Caco-2 (cell line): ENCODE measurements at regions of chr15 and their contacts with region 1.

Region 1: DNA sequence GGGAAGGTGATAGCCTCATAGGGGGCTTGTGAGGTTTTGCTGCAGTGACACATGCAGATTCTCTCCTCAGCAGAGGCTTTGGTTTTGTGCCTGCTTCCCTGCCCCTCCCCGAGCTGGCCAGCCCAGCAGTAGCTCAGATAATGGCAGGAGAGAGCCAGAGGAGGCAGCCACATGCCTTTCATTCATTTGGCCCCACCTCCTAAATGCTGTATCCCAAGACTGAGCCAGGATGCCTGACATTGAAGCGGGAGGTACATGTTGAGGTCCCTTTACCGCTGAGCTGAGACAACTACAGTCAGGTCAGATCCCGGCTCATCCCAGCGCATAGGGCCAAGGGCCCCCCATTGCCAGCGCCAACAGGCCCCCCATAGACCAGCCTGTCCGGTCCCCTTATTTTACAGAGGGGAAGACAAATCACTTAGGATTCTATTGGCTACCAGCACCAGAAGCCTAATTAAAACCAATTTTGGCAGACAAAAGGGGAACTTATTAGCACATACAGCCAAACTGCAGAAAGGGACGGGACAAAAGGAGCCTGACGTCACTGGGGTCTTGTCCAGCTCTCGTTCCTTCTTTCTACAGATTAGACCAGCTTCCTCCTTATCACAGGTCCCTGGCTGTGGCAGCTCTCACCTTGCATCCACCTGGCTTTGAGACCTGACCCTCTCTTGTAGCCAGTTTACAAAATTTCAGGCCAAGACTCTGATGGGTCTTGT is 12.1 kb upstream of the POLG start:
- DNase-seq: no peak
- H3K4me3 ChIP-seq: no peak overlapping the region
- H3K4me3 Mint-ChIP-seq: no peak overlapping the region
- H3K27ac Mint-ChIP-seq: no peak overlapping the region
- H3K4me1 ChIP-seq: no peaks in the 10 kb centered on the region
- H3K4me1 Mint-ChIP-seq: no peaks in the 10 kb centered on the region
- H3K27me3 ChIP-seq: no peaks in the 10 kb centered on the region
- H3K27me3 Mint-ChIP-seq: peaks cover 2% of the 10 kb centered on the region
- CTCF ChIP-seq: no peak

Region 2: DNA sequence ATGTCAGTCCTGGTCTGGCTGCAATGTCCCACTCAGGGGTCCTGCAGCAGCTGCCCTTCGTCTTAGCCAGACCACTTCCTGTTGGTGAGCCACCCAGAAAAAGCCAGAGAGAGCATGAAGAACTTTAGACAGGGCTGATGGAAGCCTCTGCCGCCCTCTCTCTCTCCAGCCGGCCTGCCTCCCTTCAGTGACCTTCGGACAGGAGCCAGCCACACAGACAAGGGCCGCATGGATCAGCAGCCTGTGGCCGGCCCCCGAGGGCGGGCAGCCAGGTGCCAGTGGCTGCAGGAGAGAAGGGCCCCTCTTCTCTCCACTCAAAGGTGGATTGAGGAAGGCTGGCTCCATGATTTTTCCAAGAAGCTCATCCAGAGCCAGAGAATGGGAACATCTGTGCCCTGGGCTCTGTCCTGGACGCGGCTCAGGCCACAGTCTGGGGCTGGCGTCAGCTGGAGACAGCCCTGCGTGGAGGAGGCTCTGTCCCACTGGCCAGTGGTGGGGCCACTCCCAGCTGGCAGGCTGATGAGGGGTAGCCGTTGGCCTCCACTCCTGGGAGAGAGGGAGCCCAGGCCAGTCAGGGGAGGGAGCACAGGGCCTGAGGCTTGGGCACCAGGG is 665.0 kb before region 1 on chr15:
- CTCF ChIA-PET with region 1: no interaction called
- POLR2A ChIA-PET with region 1: interaction called, 12 read pairs
- intact Hi-C with region 1: no loop called
- DNase-seq: peak in 1 of 2 experiments; percentile 34
- H3K4me3 ChIP-seq: no peak overlapping the region
- H3K4me3 Mint-ChIP-seq: no peak overlapping the region
- H3K27ac Mint-ChIP-seq: no peak overlapping the region
- H3K4me1 ChIP-seq: peaks cover 10% of the 10 kb centered on the region; the same call in 1 of the 2 replicates
- H3K4me1 Mint-ChIP-seq: no peaks in the 10 kb centered on the region
- H3K27me3 ChIP-seq: no peaks in the 10 kb centered on the region
- H3K27me3 Mint-ChIP-seq: peaks cover 12% of the 10 kb centered on the region
- CTCF ChIP-seq: no peak

Region 3: DNA sequence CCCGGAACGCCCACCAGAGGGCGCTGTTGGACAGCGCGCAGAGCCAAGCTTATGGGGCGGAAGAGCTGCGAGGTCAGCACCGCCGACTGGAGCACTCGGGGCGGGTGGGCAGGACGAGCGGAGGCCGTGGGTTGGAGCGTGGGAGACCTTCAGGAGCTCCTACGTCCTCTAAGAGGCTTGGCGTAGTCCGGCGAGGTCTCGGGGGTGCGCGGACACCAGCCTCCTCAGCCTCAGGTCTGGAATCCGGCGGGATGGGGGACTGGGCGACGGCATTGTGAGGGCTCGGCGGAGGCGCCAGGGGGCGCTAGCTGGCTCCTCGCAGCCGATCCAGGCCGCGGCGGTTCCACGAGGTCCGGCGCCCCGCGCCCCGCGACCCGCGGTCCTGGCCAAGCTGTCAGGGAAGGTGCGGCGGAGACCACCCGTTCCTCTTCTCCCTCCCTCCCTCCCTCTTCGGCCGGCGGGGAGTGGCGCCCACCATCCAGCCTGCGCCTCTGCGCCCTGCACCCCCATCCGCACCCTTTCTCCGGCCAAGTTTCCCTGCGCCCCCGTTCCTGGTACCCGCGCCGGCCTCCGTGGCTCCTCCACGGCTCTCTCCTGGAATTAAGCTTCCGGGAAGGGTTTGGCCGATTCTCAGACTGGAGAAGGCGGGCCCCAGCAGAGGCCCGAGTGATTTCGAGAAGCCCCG is 12.2 kb after region 1 on chr15:
- CTCF ChIA-PET with region 1: interaction called, 10 read pairs
- POLR2A ChIA-PET with region 1: no interaction called
- intact Hi-C with region 1: no loop called
- DNase-seq: peak; percentile 55 to 83
- H3K4me3 ChIP-seq: peak overlapping the region; percentile 65
- H3K4me3 Mint-ChIP-seq: peak overlapping the region; percentile 78
- H3K27ac Mint-ChIP-seq: no peak overlapping the region
- H3K4me1 ChIP-seq: no peaks in the 10 kb centered on the region
- H3K4me1 Mint-ChIP-seq: no peaks in the 10 kb centered on the region
- H3K27me3 ChIP-seq: peaks cover 6% of the 10 kb centered on the region
- H3K27me3 Mint-ChIP-seq: peaks cover 42% of the 10 kb centered on the region
- CTCF ChIP-seq: peak; percentile 57 to 97